ENCODE measurements at regions of chr16 and their contacts with region 1.

Region 1: DNA sequence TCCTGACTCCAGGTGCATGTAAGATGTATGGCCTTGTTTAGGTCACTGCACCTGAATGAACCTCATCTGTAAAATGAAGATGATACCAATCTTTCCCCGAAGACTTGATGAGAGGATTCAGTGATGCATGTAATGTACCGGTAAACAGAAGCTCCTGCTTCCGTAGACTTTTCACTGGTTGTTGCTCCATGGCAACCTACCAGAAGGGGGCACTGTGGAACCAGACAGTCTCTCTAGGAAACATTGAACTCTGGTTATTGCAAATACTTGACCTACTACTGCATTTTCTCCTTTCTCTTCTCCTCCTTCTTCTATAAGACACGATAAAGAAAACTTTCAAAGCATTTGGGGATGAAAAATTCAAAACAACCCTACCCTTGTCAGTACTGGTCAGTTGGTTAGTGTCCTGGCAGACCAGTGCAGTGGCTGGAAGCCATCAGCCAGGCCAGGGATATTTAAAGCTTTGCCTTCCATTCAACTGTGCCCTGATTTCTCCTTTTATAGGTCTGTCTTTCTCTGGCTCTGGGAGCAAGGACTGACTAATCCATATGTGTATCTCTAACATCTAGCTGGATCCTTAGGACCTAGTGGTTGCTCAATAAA is 667.4 kb upstream of the SALL1 start:
- DNase-seq: peak in 1 of 2 experiments; percentile 46
- ATAC-seq: 0 out of 6 replicates have a peak, but pooled peaks have one; percentile 43 to 51
- H3K4me3 ChIP-seq: no peak overlapping the region
- H3K27ac ChIP-seq: no peak overlapping the region
- H3K4me1 ChIP-seq: no peaks in the 10 kb centered on the region
- CTCF ChIP-seq: peak; percentile 38; the same call in 2 of the 3 replicates
- EP300 ChIP-seq: no peak
- POLR2A ChIP-seq: no peak
- RAD21 ChIP-seq: peak; percentile 57 to 76

Region 2: GRCh38 chr16:51797669-51798259 is 20.7 kb before region 1 on chr16:
- CTCF ChIA-PET with region 1: interaction called, 11 read pairs
- POLR2A ChIA-PET with region 1: no interaction called
- DNase-seq: no peak
- ATAC-seq: no peak
- H3K4me3 ChIP-seq: no peak overlapping the region
- H3K27ac ChIP-seq: no peak overlapping the region
- H3K4me1 ChIP-seq: no peaks in the 10 kb centered on the region
- CTCF ChIP-seq: no peak
- EP300 ChIP-seq: no peak
- POLR2A ChIP-seq: no peak
- RAD21 ChIP-seq: no peak

Region 3: DNA sequence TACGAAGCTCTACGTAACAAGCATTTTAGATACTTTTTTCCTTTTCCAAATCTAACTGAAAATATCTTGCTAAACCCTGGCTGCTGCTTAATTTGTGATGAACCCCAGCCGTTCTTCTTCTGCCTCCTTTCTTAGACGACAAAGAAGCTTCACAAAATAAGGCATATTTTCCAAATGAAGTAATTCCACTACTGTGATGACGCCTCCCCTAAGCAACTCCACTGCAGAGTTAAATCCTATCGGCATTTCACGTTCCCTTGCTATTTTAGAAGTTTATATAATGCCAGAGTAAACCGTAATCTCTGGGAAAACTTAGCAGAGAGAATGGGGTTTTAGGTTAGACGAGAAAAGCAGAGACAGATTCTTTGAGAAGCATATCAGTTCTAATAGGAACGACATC is 15.7 kb after region 1 on chr16:
- CTCF ChIA-PET with region 1: interaction called, 12 read pairs
- POLR2A ChIA-PET with region 1: no interaction called
- DNase-seq: no peak
- ATAC-seq: no peak
- H3K4me3 ChIP-seq: no peak overlapping the region
- H3K27ac ChIP-seq: no peak overlapping the region
- H3K4me1 ChIP-seq: no peaks in the 10 kb centered on the region
- CTCF ChIP-seq: no peak
- EP300 ChIP-seq: no peak
- POLR2A ChIP-seq: no peak
- RAD21 ChIP-seq: no peak

Region 4: GRCh38 chr16:51951668-51952298 is 133.3 kb after region 1 on chr16:
- CTCF ChIA-PET with region 1: no interaction called
- POLR2A ChIA-PET with region 1: no interaction called
- DNase-seq: no peak
- ATAC-seq: no peak
- H3K4me3 ChIP-seq: no peak overlapping the region
- H3K27ac ChIP-seq: no peak overlapping the region
- H3K4me1 ChIP-seq: no peaks in the 10 kb centered on the region
- CTCF ChIP-seq: no peak
- EP300 ChIP-seq: no peak
- POLR2A ChIP-seq: no peak
- RAD21 ChIP-seq: no peak

Region 5: DNA sequence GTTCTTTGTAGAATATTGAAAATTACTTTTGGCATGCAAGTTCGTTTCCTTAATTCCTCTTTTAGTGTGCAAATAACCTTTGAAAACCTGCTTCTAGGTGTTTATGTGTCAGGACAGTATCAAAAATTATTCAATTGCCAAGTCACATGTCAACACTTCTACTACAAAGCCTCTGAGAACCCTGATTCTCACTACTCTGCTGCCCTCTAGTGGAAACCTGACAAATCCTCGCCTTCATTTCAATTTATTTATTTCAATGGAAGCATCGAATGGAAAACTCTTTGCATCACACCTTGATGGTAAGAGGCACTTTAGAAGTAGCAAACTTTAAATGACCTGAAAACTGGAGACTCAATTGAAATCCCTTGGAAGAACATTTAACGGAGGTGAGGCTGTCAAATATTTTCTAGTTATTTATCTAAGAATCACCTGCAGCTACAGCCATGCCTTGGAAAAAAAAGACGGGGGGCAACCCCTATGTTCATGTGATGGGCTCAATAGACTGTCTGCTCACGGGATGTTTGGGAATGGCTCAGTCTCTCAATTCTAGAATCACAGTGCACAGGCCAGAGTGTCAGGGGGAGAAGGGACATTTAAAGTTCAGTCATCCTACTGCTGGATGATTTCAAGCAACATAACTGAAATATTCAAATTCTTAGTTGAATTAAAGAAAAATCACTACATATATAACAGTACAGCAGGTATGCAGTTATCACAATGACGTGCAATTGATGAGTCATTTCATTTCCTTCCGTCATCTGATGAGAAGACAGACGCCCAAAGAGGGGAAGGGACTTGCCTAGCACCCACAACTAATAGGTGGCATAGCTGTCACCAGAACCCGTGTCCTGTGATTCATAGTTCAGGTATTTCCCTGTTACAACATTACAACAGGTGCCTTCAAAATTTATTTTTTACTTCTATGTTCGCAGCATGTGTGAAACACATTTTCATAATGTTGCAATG is 164.6 kb after region 1 on chr16:
- CTCF ChIA-PET with region 1: interaction called, 22 read pairs
- POLR2A ChIA-PET with region 1: no interaction called
- DNase-seq: peak; percentile 25 to 76
- ATAC-seq: peak; percentile 67 to 75; a peak in 3 of 6 replicates
- H3K4me3 ChIP-seq: no peak overlapping the region
- H3K27ac ChIP-seq: no peak overlapping the region
- H3K4me1 ChIP-seq: no peaks in the 10 kb centered on the region
- CTCF ChIP-seq: peak; percentile 75
- EP300 ChIP-seq: no peak
- POLR2A ChIP-seq: no peak
- RAD21 ChIP-seq: peak; percentile 87 to 90

Measured in A549 (cell line).